Activated CD4-positive, alpha-beta T cell treated with anti-CD3 and anti-CD28 coated beads, Interleukin-2, amount 10 ng/mL, durations not matched to agents 24 days and 14 days (primary cell): ENCODE measurements at regions of chr12 and their contacts with region 1.

Region 1: DNA sequence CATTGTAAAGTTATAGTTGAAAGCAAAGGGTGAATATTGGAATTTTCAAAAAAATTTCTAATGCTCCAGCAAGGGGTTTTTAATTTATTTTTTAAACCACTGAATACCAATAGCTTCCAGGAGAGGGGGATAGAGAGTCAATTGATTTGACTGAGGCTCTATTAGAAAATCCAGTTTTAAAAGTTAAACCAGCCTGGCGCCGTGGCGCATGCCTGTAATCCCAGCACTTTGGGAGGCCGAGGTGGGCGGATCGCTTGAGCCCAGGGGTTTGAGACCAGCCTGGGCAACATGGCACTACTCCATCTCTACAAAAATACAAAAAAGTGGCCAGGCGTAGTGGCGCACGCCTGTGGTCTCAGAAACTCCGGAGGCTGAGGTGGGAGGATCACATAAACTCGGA is 150.1 kb downstream of the SLC38A4 start:
- DNase-seq: peak; percentile 62
- H3K4me3 Mint-ChIP-seq: no peak overlapping the region
- H3K27ac Mint-ChIP-seq: no peak overlapping the region
- H3K4me1 Mint-ChIP-seq: peaks cover 11% of the 10 kb centered on the region
- H3K27me3 Mint-ChIP-seq: peaks cover 2% of the 10 kb centered on the region

Region 2: DNA sequence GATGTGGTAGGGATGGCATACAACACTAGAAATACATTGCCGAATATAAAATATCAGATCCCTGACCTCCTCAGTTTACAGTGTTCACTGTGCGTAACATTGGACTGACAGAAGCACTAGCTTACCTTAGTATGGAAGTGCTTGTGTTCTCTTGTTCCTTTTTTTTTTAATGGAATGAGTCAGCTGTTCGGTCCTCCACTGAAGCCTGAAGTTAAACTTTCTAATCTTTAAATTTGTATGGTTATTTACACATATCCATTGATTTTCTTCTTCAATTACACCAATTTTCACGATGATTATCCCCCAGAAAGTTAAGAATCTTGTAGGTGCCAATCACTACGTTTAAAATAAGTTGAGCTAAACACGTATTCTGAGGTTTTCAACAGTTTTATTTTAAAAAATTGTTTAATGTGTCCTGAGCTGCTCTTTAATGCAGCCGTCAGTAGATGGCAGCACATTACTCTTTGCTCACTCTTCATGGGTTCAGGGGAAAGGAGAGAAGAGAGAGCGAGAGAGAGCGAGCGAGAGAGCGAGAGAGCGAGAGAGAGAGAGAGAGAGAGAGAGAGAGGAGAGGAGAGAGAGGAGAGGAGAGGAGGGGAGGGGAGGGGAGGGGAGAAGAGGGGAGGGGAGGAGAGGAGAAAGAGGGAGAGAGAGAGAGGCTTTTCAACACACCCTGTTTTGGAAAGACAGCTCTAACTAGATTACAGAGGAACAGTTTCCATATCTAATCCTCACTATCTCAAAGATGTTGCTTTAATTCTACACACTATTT is 550.7 kb before region 1 on chr12:
- intact Hi-C with region 1: loop called (anchors 10 kb)
- DNase-seq: peak; percentile 87
- H3K4me3 Mint-ChIP-seq: peak overlapping the region; percentile 56
- H3K27ac Mint-ChIP-seq: peak overlapping the region; percentile 75
- H3K4me1 Mint-ChIP-seq: peaks cover 5% of the 10 kb centered on the region
- H3K27me3 Mint-ChIP-seq: peaks cover 49% of the 10 kb centered on the region

Region 3: GRCh38 chr12:46153268-46153872 is 522.4 kb before region 1 on chr12:
- intact Hi-C with region 1: loop called (anchors 5 kb)
- DNase-seq: no peak
- H3K4me3 Mint-ChIP-seq: no peak overlapping the region
- H3K27ac Mint-ChIP-seq: no peak overlapping the region
- H3K4me1 Mint-ChIP-seq: no peaks in the 10 kb centered on the region
- H3K27me3 Mint-ChIP-seq: peaks cover 11% of the 10 kb centered on the region

Region 4: GRCh38 chr12:46342562-46343033 is 333.1 kb before region 1 on chr12:
- intact Hi-C with region 1: loop called (anchors 5 kb)
- DNase-seq: peak; percentile 76
- H3K4me3 Mint-ChIP-seq: no peak overlapping the region
- H3K27ac Mint-ChIP-seq: no peak overlapping the region
- H3K4me1 Mint-ChIP-seq: no peaks in the 10 kb centered on the region
- H3K27me3 Mint-ChIP-seq: peaks cover 20% of the 10 kb centered on the region

Region 5: GRCh38 chr12:46357438-46358324 is 318.1 kb before region 1 on chr12:
- intact Hi-C with region 1: no loop called
- DNase-seq: no peak
- H3K4me3 Mint-ChIP-seq: no peak overlapping the region
- H3K27ac Mint-ChIP-seq: peak overlapping the region; percentile 13
- H3K4me1 Mint-ChIP-seq: peaks cover 33% of the 10 kb centered on the region
- H3K27me3 Mint-ChIP-seq: no peaks in the 10 kb centered on the region

Region 6: DNA sequence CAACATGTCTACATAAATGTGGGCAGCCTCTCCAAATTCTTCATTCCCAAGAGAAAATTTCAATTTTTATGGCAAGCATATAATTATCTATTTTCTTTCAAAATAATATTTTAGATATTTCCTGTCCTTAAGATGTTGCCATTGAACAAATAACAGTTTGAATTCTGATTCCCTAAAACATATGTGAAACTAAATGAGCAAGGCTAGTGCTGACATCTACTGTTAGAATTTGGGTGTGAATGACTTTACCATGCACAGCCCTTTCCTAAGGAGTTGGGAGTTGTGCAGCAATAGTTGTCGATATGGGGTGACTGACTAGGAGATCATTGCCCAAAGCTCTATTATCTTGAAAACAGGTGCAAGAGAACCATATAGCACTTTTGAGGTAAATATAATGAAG is 258.2 kb after region 1 on chr12:
- intact Hi-C with region 1: no loop called
- DNase-seq: peak; percentile 59
- H3K4me3 Mint-ChIP-seq: no peak overlapping the region
- H3K27ac Mint-ChIP-seq: no peak overlapping the region
- H3K4me1 Mint-ChIP-seq: no peaks in the 10 kb centered on the region
- H3K27me3 Mint-ChIP-seq: peaks cover 33% of the 10 kb centered on the region

Region 7: GRCh38 chr12:46983393-46984266 is 307.9 kb after region 1 on chr12:
- intact Hi-C with region 1: loop called (anchors 10 kb)
- DNase-seq: peak; percentile 81
- H3K4me3 Mint-ChIP-seq: no peak overlapping the region
- H3K27ac Mint-ChIP-seq: no peak overlapping the region
- H3K4me1 Mint-ChIP-seq: peaks cover 6% of the 10 kb centered on the region
- H3K27me3 Mint-ChIP-seq: peaks cover 19% of the 10 kb centered on the region